ENCODE measurements at regions of chr6 and their contacts with region 1.

Region 1: GRCh38 chr6:165830761-165831160 is 167.7 kb upstream of the PDE10A start:
- DNase-seq: no peak
- ATAC-seq: no peak
- H3K4me3 ChIP-seq: no peak overlapping the region
- H3K4me3 Mint-ChIP-seq: no peak overlapping the region
- H3K27ac ChIP-seq: no peak overlapping the region
- H3K27ac Mint-ChIP-seq: no peak overlapping the region
- H3K4me1 ChIP-seq: peaks cover 2 to 5% of the 10 kb centered on the region in 2 experiments
- H3K4me1 Mint-ChIP-seq: peaks cover 7 to 12% (median 12%) of the 10 kb centered on the region in 3 donors
- H3K27me3 ChIP-seq: peaks cover 0 to 31% of the 10 kb centered on the region in 2 experiments
- H3K27me3 Mint-ChIP-seq: peaks cover 39 to 54% of the 10 kb centered on the region in 2 donors

Region 2: DNA sequence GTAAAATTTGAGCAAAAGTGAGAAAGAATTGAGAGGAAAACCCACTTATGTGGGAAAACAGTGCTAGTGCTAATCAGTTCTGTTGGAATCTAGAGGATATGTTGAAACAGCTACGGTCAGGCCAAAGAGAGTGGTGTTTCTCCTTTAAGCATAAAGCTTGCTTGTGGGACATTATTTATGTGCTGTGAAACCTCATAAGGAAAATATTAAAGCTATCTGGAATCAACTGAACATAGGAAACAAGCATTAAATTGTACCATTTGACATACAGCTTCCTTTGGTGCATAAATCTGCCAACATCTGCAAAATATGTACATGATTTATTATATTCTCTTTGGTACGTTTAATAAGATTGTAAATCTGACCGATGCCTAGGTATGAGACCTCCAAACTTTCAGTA is 14.7 kb after region 1 on chr6:
- CTCF ChIA-PET with region 1: interaction called, 3 to 12 read pairs
- POLR2A ChIA-PET with region 1: no interaction called
- DNase-seq: no peak
- ATAC-seq: no peak
- H3K4me3 ChIP-seq: no peak overlapping the region
- H3K4me3 Mint-ChIP-seq: no peak overlapping the region
- H3K27ac ChIP-seq: no peak overlapping the region
- H3K27ac Mint-ChIP-seq: no peak overlapping the region
- H3K4me1 ChIP-seq: peaks cover 5% of the 10 kb centered on the region in 2 experiments
- H3K4me1 Mint-ChIP-seq: peaks cover 9 to 12% (median 10%) of the 10 kb centered on the region in 3 donors
- H3K27me3 ChIP-seq: peaks cover 3 to 53% of the 10 kb centered on the region in 2 experiments
- H3K27me3 Mint-ChIP-seq: peaks cover 53 to 67% of the 10 kb centered on the region in 2 donors